ENCODE measurements at regions of chrX and their contacts with region 1.

Region 1: DNA sequence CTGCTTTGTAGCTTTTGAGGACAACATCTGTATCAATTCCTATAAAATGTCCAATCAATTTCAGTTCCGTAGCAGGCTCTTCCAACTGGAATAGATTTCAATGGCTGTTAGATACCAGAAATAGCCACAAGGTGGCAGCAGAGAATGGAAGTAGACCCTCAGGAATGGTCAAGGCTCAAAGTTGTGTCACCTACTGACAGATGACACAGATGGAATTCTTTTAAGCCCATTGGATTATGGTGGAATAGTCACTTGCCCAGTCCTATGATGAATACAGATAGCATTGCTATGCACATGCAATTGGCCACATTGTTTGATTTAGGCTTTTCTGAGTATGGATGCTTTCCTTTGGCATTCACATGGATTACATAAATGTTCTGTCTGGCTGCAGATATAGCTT is 130.4 kb upstream of the RADX start:
- DNase-seq: peak; percentile 20
- CTCF ChIP-seq: peak; percentile 58

Region 2: GRCh38 chrX:106363214-106363613 is 118.1 kb before region 1 on chrX:
- CTCF ChIA-PET with region 1: no interaction called
- POLR2A ChIA-PET with region 1: no interaction called
- DNase-seq: no peak
- CTCF ChIP-seq: no peak

Region 3: GRCh38 chrX:106467422-106467821 is 13.9 kb before region 1 on chrX:
- CTCF ChIA-PET with region 1: interaction called, 14 read pairs
- POLR2A ChIA-PET with region 1: no interaction called
- DNase-seq: no peak
- CTCF ChIP-seq: no peak

Region 4: GRCh38 chrX:106611679-106612392 is 130.5 kb after region 1 on chrX and contains the start of gene RADX:
- CTCF ChIA-PET with region 1: interaction called, 10 read pairs
- POLR2A ChIA-PET with region 1: no interaction called
- DNase-seq: peak; percentile 77
- CTCF ChIP-seq: no peak

Region 5: GRCh38 chrX:106619797-106620196 is 138.5 kb after region 1 on chrX:
- CTCF ChIA-PET with region 1: interaction called, 17 read pairs
- POLR2A ChIA-PET with region 1: no interaction called
- DNase-seq: no peak
- CTCF ChIP-seq: peak; percentile 20